CD8-positive, alpha-beta T cell (primary cell): ENCODE measurements at regions of chr2 and their contacts with region 1.

Region 1: GRCh38 chr2:30336978-30337841 is 105.9 kb downstream of the LBH start:
- DNase-seq: peak in 8 of 9 experiments; percentile 30 to 84 (median 60)
- ATAC-seq: peak; percentile 80
- H3K4me3 ChIP-seq: peak overlapping the region; percentile 31 to 43
- H3K4me3 Mint-ChIP-seq: peak overlapping the region; percentile 80
- H3K27ac ChIP-seq: peak overlapping the region; percentile 65 to 89
- H3K27ac Mint-ChIP-seq: peak overlapping the region; percentile 98
- H3K4me1 ChIP-seq: peaks cover 68% of the 10 kb centered on the region
- H3K4me1 Mint-ChIP-seq: peaks cover 82% of the 10 kb centered on the region
- H3K27me3 ChIP-seq: no peaks in the 10 kb centered on the region
- H3K27me3 Mint-ChIP-seq: no peaks in the 10 kb centered on the region
- CTCF ChIP-seq: no peak

Region 2: DNA sequence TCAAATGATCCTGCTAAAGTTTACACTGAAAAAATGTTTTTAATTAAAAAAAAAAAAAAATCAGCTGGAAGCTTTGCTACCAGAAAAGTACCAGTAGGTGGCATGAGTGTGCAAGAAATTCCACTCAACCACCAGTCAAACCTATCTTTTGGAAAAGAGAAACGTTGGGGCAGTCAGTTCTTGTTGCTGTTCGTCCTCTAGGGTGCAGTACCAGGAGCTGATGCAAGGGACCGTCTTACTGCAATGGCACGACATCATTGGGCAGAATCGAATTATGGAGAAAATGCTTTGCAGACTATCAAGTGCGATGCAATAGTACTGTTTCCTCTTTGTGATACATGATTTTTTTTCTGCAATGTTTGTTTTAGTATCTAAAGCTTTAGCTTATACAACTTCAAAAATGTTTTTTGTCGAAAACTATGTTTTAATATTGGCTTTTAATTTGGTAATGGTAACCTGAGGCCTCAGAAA is 172.1 kb before region 1 on chr2:
- CTCF ChIA-PET with region 1: interaction called, 16 read pairs
- POLR2A ChIA-PET with region 1: interaction called, 3 read pairs
- intact Hi-C with region 1: no loop called
- DNase-seq: peak in 8 of 9 experiments; percentile 28 to 90 (median 60)
- ATAC-seq: peak; percentile 83
- H3K4me3 ChIP-seq: no peak overlapping the region
- H3K4me3 Mint-ChIP-seq: no peak overlapping the region
- H3K27ac ChIP-seq: no peak overlapping the region
- H3K27ac Mint-ChIP-seq: no peak overlapping the region
- H3K4me1 ChIP-seq: no peaks in the 10 kb centered on the region
- H3K4me1 Mint-ChIP-seq: peaks cover 5% of the 10 kb centered on the region
- H3K27me3 ChIP-seq: no peaks in the 10 kb centered on the region
- H3K27me3 Mint-ChIP-seq: no peaks in the 10 kb centered on the region
- CTCF ChIP-seq: peak; percentile 93

Region 3: DNA sequence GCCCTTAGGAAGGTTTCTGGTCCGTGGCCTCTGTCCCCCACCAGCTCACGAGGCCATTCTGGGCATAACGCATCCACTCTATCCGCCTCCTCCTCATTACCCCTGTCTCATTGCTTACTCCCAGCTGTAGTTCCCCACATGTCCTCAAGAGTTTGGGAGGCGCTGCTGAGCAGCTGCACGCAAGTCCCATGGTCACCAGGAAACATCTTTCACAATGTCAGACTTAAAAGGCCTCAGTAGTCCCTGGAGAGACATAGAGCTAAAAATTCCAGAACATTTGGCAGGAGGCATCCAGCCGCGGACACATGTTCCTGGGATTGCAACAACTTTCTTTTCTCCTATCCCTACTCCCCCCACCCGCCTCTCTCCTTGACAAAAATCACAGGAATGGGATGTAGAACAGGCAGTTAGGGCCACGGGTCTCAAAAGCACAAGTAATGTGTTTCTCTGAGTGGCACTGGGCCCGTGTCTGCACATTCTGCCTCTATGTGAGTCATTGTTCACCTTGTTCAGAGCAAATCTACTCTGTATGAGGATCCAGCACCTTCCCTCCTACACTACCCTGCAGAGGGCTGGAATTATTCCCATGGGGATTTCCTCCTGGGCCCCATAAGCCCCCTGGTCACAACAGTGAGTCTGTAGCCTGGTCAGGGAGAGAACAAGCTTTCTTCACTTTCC is 97.8 kb before region 1 on chr2:
- CTCF ChIA-PET with region 1: interaction called, 52 read pairs
- POLR2A ChIA-PET with region 1: interaction called, 4 read pairs
- intact Hi-C with region 1: no loop called
- DNase-seq: peak; percentile 48 to 91 (median 79)
- ATAC-seq: peak; percentile 73
- H3K4me3 ChIP-seq: peak overlapping the region; percentile 11 to 39
- H3K4me3 Mint-ChIP-seq: peak overlapping the region; percentile 94
- H3K27ac ChIP-seq: peak overlapping the region; percentile 24 to 60
- H3K27ac Mint-ChIP-seq: peak overlapping the region; percentile 96
- H3K4me1 ChIP-seq: peaks cover 90% of the 10 kb centered on the region
- H3K4me1 Mint-ChIP-seq: peaks cover 88% of the 10 kb centered on the region
- H3K27me3 ChIP-seq: no peaks in the 10 kb centered on the region
- H3K27me3 Mint-ChIP-seq: no peaks in the 10 kb centered on the region
- CTCF ChIP-seq: peak; percentile 95

Region 4: GRCh38 chr2:30266051-30266621 is 71.1 kb before region 1 on chr2:
- CTCF ChIA-PET with region 1: interaction called, 30 read pairs
- POLR2A ChIA-PET with region 1: interaction called, 10 read pairs
- intact Hi-C with region 1: loop called (anchors 2 to 5 kb)
- DNase-seq: peak; percentile 49 to 89 (median 71)
- ATAC-seq: peak; percentile 90
- H3K4me3 ChIP-seq: peak overlapping the region; percentile 31 to 40
- H3K4me3 Mint-ChIP-seq: peak overlapping the region; percentile 82
- H3K27ac ChIP-seq: peak overlapping the region; percentile 72 to 87
- H3K27ac Mint-ChIP-seq: peak overlapping the region; percentile 98
- H3K4me1 ChIP-seq: peaks cover 69% of the 10 kb centered on the region
- H3K4me1 Mint-ChIP-seq: peaks cover 85% of the 10 kb centered on the region
- H3K27me3 ChIP-seq: no peaks in the 10 kb centered on the region
- H3K27me3 Mint-ChIP-seq: no peaks in the 10 kb centered on the region
- CTCF ChIP-seq: no peak

Region 5: GRCh38 chr2:30324245-30324908 is 12.8 kb before region 1 on chr2:
- CTCF ChIA-PET with region 1: interaction called, 19 read pairs
- POLR2A ChIA-PET with region 1: interaction called, 9 read pairs
- intact Hi-C with region 1: no loop called
- DNase-seq: no peak
- ATAC-seq: no peak
- H3K4me3 ChIP-seq: no peak overlapping the region
- H3K4me3 Mint-ChIP-seq: no peak overlapping the region
- H3K27ac ChIP-seq: no peak overlapping the region
- H3K27ac Mint-ChIP-seq: no peak overlapping the region
- H3K4me1 ChIP-seq: peaks cover 24% of the 10 kb centered on the region
- H3K4me1 Mint-ChIP-seq: peaks cover 36% of the 10 kb centered on the region
- H3K27me3 ChIP-seq: no peaks in the 10 kb centered on the region
- H3K27me3 Mint-ChIP-seq: no peaks in the 10 kb centered on the region
- CTCF ChIP-seq: no peak

Region 6: DNA sequence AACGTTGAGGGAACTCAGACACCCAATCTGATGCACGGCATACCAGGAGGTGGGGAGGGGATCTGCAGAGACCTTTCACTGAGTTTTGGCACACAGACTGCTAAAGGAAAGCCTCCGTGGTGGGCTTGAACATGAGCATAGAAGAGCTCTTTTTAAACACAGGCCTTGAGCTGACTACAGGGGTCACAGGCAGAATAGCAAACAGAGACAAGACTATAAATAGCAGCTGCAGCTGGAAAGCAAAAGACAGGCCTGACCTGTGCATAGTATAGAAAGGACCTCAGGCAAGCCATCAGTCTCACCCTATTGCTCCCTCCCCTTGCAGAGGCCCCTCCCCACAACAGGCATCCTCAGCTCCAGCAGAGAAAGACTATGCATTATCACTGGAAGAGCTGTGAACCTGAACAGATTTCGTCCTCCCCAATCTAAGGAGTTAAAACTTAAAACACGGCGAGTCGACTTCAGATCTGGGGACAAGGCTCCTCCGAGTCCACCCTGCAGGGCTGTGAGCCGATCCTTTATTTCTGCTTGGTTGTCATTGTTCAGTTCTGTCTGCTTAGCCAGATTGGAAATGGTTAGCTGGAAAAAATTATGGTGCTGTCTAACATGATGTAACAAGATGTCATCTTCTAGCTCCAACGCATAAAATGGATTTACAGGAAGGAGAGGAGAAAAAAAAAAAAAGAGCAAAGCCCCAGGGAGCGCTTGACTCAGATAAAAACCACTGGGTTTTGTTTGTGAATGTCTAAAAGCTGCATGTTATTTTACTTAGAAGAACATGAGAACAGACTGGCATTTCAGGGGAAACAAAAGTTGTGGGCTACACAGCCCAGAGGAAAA is 84.6 kb after region 1 on chr2:
- CTCF ChIA-PET with region 1: interaction called, 7 read pairs
- POLR2A ChIA-PET with region 1: interaction called, 28 read pairs
- intact Hi-C with region 1: loop called in 1 of 2 experiments (anchors 1 kb)
- DNase-seq: peak in 6 of 9 experiments; percentile 27 to 81 (median 57)
- ATAC-seq: peak; percentile 45
- H3K4me3 ChIP-seq: peak overlapping the region in 1 of 2 experiments; percentile 26
- H3K4me3 Mint-ChIP-seq: peak overlapping the region; percentile 53
- H3K27ac ChIP-seq: peak overlapping the region; percentile 60 to 70
- H3K27ac Mint-ChIP-seq: peak overlapping the region; percentile 95
- H3K4me1 ChIP-seq: peaks cover 54% of the 10 kb centered on the region
- H3K4me1 Mint-ChIP-seq: peaks cover 51% of the 10 kb centered on the region
- H3K27me3 ChIP-seq: no peaks in the 10 kb centered on the region
- H3K27me3 Mint-ChIP-seq: no peaks in the 10 kb centered on the region
- CTCF ChIP-seq: no peak

Region 7: DNA sequence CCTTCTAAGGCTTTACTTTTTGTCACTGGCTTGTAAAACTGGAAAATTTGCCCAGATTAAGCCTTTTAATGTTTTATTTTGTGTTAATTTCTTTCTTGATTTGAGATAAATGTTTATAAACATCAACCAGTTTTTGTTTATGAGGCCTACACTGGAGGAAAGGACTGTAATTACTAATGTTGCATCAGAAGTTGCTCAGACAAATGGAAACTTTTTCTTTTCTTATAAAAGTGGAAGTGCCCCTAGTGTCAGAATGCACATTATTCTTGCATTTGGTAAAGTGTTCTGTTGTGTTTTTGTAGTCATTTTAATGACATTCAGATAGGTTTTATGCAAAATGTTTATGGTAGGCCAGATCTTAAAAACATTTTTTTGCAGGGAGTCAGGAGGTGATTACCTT is 135.1 kb after region 1 on chr2:
- CTCF ChIA-PET with region 1: interaction called, 27 read pairs
- POLR2A ChIA-PET with region 1: interaction called, 4 read pairs
- intact Hi-C with region 1: loop called (anchors 2 to 10 kb)
- DNase-seq: no peak
- ATAC-seq: no peak
- H3K4me3 ChIP-seq: no peak overlapping the region
- H3K4me3 Mint-ChIP-seq: no peak overlapping the region
- H3K27ac ChIP-seq: no peak overlapping the region
- H3K27ac Mint-ChIP-seq: no peak overlapping the region
- H3K4me1 ChIP-seq: peaks cover 14% of the 10 kb centered on the region
- H3K4me1 Mint-ChIP-seq: peaks cover 49% of the 10 kb centered on the region
- H3K27me3 ChIP-seq: no peaks in the 10 kb centered on the region
- H3K27me3 Mint-ChIP-seq: no peaks in the 10 kb centered on the region
- CTCF ChIP-seq: no peak